CD14-positive monocyte (primary cell): ENCODE measurements at regions of chr14 and their contacts with region 1.

Region 1: GRCh38 chr14:73295198-73295796 is 58.0 kb downstream of the PAPLN start:
- DNase-seq: peak in 2 of 3 donors; percentile 20 to 48
- H3K4me3 ChIP-seq: no peak overlapping the region
- H3K4me3 Mint-ChIP-seq: no peak overlapping the region
- H3K27ac ChIP-seq: no peak overlapping the region
- H3K27ac Mint-ChIP-seq: no peak overlapping the region
- H3K4me1 ChIP-seq: no peaks in the 10 kb centered on the region
- H3K4me1 Mint-ChIP-seq: no peaks in the 10 kb centered on the region
- H3K27me3 ChIP-seq: no peaks in the 10 kb centered on the region
- H3K27me3 Mint-ChIP-seq: peaks cover 0 to 1% (median 0%) of the 10 kb centered on the region in 3 donors
- CTCF ChIP-seq: peak; percentile 73

Region 2: DNA sequence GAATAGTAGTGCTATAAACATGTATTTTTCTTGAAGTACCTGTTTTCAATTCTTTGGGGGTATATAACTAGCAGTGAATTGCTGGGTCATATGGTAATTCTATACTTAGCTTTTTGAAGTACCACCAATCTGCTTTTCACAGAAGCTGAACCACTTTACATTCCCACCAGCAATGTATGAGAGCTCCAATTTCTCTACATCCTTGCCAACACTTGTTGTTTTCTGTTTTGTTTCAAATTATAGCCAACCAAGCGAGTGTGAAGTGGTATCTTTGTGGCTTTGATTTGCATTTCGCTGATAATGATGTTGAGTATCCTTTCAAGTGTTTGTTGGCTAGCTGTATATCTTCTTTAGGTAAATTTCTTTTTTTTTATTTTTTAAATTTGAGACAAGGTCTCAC is 37.7 kb after region 1 on chr14:
- intact Hi-C with region 1: no loop called
- DNase-seq: no peak
- H3K4me3 ChIP-seq: no peak overlapping the region
- H3K4me3 Mint-ChIP-seq: no peak overlapping the region
- H3K27ac ChIP-seq: no peak overlapping the region
- H3K27ac Mint-ChIP-seq: no peak overlapping the region
- H3K4me1 ChIP-seq: no peaks in the 10 kb centered on the region
- H3K4me1 Mint-ChIP-seq: no peaks in the 10 kb centered on the region
- H3K27me3 ChIP-seq: no peaks in the 10 kb centered on the region
- H3K27me3 Mint-ChIP-seq: peaks cover 0 to under 1% (median 0%) of the 10 kb centered on the region in 3 donors
- CTCF ChIP-seq: no peak

Region 3: GRCh38 chr14:73477618-73478266 is 182.4 kb after region 1 on chr14:
- intact Hi-C with region 1: loop called (anchors 5 kb)
- DNase-seq: peak; percentile 78 to 94 (median 86)
- H3K4me3 ChIP-seq: no peak overlapping the region
- H3K4me3 Mint-ChIP-seq: peak overlapping the region in 1 of 2 donors; percentile 9
- H3K27ac ChIP-seq: peak overlapping the region; percentile 58 to 62
- H3K27ac Mint-ChIP-seq: peak overlapping the region; percentile 79 to 93 (median 89)
- H3K4me1 ChIP-seq: peaks cover 13 to 14% of the 10 kb centered on the region in 2 donors
- H3K4me1 Mint-ChIP-seq: peaks cover 19% of the 10 kb centered on the region
- H3K27me3 ChIP-seq: no peaks in the 10 kb centered on the region
- H3K27me3 Mint-ChIP-seq: peaks cover 0 to 3% (median 1%) of the 10 kb centered on the region in 3 donors
- CTCF ChIP-seq: no peak

Region 4: DNA sequence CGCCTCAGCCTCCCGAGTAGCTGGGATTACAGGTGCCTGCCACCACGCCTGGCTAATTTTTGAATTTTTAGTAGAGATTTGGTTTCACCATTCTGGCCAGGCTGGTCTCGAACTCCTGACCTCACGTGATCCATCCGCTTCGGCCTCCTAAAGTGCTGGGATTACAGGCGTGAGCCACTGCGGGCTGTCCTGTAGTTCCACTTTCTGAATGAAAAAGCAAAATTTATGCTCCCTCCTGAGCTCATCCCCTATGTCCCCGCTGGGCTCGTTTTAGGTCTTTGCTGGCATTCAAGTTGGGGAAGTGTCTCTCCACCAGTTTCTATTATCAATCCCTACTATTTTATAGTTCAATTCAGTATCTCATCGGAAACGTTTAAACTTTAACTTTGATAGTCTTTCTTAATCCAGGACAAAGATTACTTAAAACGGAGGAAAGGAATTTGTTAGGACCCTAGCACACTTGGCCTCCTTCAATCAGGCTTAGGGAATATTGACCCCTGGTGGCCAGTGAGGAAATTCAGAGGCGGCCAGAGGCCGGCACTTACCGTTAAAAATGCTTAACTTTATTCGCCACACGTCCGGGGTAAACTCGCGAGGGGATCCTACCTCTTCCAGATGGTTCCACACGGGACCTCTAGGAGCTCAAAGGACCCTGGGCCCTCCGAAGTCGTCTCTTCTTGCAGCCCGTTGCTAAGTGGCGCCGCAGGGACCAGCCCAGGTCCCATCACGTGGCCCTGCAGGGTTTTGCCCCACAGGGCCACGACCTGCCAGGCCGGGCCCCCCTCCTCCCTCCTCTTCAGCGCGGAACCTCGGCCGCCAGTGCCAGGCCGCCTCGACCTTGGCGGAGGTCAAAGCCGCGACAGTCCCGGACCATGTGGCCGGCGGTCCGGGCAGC is 338.1 kb after region 1 on chr14:
- intact Hi-C with region 1: loop called in 1 of 2 experiments (anchors 10 kb)
- DNase-seq: peak; percentile 48 to 61 (median 59)
- H3K4me3 ChIP-seq: peak overlapping the region; percentile 47 to 77 (median 61)
- H3K4me3 Mint-ChIP-seq: peak overlapping the region; percentile 83 to 95
- H3K27ac ChIP-seq: peak overlapping the region in 1 of 2 donors; percentile 13
- H3K27ac Mint-ChIP-seq: peak overlapping the region in 6 of 7 donors; percentile 33 to 82 (median 74)
- H3K4me1 ChIP-seq: peaks cover 17% of the 10 kb centered on the region in 2 donors
- H3K4me1 Mint-ChIP-seq: peaks cover 9% of the 10 kb centered on the region
- H3K27me3 ChIP-seq: peaks cover 0 to 23% of the 10 kb centered on the region in 2 donors
- H3K27me3 Mint-ChIP-seq: peaks cover 12 to 28% (median 26%) of the 10 kb centered on the region in 3 donors
- CTCF ChIP-seq: peak; percentile 90